Calu3 (cell line): ENCODE measurements at regions of chr9 and their contacts with region 1.

Region 1: GRCh38 chr9:113446323-113446740 is 17.2 kb upstream of the RGS3 start:
- DNase-seq: no peak
- H3K4me3 Mint-ChIP-seq: no peak overlapping the region
- H3K27ac Mint-ChIP-seq: no peak overlapping the region
- H3K4me1 Mint-ChIP-seq: no peaks in the 10 kb centered on the region
- H3K27me3 Mint-ChIP-seq: no peaks in the 10 kb centered on the region
- CTCF ChIP-seq: no peak

Region 2: GRCh38 chr9:113591001-113591898 is 144.9 kb after region 1 on chr9:
- CTCF ChIA-PET with region 1: interaction called, 15 read pairs
- intact Hi-C with region 1: loop called (anchors 2 kb)
- DNase-seq: peak; percentile 75
- H3K4me3 Mint-ChIP-seq: no peak overlapping the region
- H3K27ac Mint-ChIP-seq: no peak overlapping the region
- H3K4me1 Mint-ChIP-seq: no peaks in the 10 kb centered on the region
- H3K27me3 Mint-ChIP-seq: no peaks in the 10 kb centered on the region
- CTCF ChIP-seq: peak; percentile 81